ENCODE measurements at regions of chr10 and their contacts with region 1.

Region 1: DNA sequence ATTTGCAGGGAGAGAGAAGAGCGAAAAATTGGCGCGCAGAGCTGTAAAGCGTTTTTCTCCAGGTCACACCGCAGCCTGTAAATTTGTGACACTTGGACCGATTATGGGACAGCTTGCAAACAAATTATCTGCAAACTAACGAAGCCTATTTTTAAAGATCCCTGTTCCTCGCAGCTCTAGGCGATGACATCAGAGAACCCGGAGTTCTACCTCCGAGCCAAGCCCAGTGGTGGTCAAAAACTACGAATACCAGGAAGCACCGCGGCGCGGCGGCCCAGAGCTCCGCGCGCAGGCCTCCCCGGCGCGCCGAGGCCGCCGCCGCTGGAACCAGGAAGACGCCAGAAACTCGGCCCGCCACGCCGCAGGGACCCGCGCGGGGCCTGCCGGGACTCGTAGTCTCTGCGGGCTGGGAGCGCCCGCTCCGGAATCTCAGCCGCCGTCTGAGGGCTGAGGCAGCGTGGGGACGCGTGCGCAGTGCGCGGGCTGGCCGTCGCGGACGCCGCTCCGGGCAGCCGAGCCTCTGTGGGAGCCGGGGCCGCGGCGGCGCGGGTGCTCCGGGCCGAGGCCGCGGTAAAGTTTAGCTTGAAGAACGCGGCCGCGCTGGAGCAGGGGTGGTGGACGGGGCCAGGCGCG is at the start of gene PLEKHA1:
- DNase-seq: peak; percentile 90
- H3K4me3 Mint-ChIP-seq: peak within 1 kb of the TSS; percentile 90
- H3K27ac Mint-ChIP-seq: peak within 1 kb of the TSS; percentile 92
- H3K4me1 Mint-ChIP-seq: peaks cover 15% of the 10 kb centered on the region
- H3K27me3 Mint-ChIP-seq: peaks cover 52% of the 10 kb centered on the region
- total RNA-seq, gene PLEKHA1: 4.1 and 5.6 TPM in 2 replicates

Region 2: DNA sequence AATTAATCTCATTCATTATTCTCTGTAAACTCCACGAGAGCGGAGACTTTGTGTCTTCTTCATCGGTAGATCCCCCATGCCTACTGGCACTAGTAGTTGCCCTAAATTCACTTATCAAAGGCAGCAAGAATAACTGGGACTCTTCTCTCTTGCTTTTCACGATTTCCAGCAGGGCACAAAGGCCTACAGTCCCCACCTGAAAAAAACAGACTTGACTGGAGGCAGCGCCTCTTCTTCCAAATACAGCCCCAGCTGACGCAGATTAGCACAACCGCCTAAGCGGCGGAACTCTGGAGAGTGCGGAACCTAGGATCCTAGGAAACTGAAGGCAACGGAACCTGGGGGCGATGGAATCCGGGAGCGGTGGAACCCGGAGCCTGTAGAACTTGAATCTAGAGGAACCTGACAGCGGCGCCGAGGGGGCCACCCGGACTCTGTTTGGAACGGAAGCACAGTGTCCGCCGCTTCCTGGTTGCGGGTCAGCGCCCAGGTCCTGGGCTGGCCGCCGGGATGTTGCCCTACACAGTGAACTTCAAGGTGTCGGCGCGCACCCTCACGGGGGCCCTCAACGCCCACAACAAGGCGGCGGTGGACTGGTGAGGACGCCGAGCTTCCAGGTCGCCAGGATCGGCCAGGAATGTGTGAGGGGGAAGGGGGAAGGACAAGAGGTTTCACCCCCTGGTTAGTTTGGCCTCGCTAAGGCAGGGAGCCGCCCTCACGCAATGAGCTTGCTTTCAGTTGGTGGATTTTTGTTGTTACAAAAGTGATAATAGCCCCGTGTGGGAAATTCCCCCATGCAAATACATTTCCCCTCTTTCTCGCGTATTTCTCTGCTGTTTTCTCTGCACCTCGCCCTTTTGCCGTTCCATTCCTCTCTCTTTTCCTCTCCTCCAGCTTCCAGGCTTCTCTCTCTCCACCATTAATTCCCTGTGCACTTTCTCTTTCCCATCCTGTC is 1523.2 kb before region 1 on chr10 and contains the start of gene WDR11:
- intact Hi-C with region 1: loop called (anchors 10 kb)
- DNase-seq: peak; percentile 65
- H3K4me3 Mint-ChIP-seq: peak within 1 kb of the TSS; percentile 95
- H3K27ac Mint-ChIP-seq: peak within 1 kb of the TSS; percentile 96
- H3K4me1 Mint-ChIP-seq: peaks cover 49% of the 10 kb centered on the region
- H3K27me3 Mint-ChIP-seq: peaks cover 4% of the 10 kb centered on the region
- total RNA-seq, gene WDR11: 53.0 and 53.1 TPM in 2 replicates

Region 3: GRCh38 chr10:122362621-122363020 is 11.7 kb before region 1 on chr10:
- intact Hi-C with region 1: no loop called
- DNase-seq: no peak
- H3K4me3 Mint-ChIP-seq: no peak overlapping the region
- H3K27ac Mint-ChIP-seq: no peak overlapping the region
- H3K4me1 Mint-ChIP-seq: no peaks in the 10 kb centered on the region
- H3K27me3 Mint-ChIP-seq: peaks cover 12% of the 10 kb centered on the region

Region 4: GRCh38 chr10:122388287-122388997 is 14.1 kb after region 1 on chr10:
- intact Hi-C with region 1: loop called (anchors 1 kb)
- DNase-seq: no peak
- H3K4me3 Mint-ChIP-seq: no peak overlapping the region
- H3K27ac Mint-ChIP-seq: no peak overlapping the region
- H3K4me1 Mint-ChIP-seq: peaks cover 10% of the 10 kb centered on the region
- H3K27me3 Mint-ChIP-seq: peaks cover 35% of the 10 kb centered on the region

Region 5: DNA sequence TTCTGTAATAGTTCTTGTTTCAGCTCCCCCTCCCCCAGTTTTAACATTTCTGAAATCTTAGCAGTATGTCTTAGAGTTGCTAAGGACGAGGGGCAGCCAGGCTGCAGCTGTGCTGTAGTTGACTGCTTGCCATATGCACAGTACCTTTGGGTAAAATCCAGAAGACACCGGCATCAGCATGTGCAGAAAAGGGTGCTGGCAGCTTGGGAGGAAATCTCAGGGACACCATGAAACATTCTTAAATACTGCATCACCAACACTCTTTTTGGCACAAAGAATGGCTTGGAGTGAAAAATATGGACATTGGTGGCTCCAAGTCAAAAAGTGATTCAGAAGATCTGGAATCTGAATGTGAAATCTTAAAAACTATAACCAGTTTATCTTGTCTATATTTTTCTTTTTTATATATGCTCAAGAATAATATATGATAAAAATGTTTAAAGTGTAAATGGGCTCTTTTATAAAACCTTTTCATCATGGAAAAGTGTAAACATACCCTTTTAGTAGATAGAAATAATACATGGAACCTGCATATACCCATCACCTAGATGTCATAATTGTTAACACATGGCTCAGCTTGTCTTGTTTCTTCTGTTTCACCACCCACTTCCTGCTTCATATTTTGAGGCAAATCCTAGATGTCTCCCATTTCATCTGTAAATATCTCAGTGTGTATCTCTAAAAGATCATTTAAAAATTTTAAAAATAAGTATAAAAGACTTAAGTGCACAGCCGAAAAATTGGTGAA is 45.7 kb after region 1 on chr10:
- intact Hi-C with region 1: loop called (anchors 1 kb)
- DNase-seq: no peak
- H3K4me3 Mint-ChIP-seq: no peak overlapping the region
- H3K27ac Mint-ChIP-seq: no peak overlapping the region
- H3K4me1 Mint-ChIP-seq: peaks cover 41% of the 10 kb centered on the region
- H3K27me3 Mint-ChIP-seq: no peaks in the 10 kb centered on the region

Region 6: GRCh38 chr10:122515588-122516231 is 141.4 kb after region 1 on chr10:
- intact Hi-C with region 1: loop called (anchors 5 kb)
- DNase-seq: peak; percentile 17
- H3K4me3 Mint-ChIP-seq: peak overlapping the region; percentile 11
- H3K27ac Mint-ChIP-seq: peak overlapping the region; percentile 35
- H3K4me1 Mint-ChIP-seq: peaks cover 22% of the 10 kb centered on the region
- H3K27me3 Mint-ChIP-seq: peaks cover 6% of the 10 kb centered on the region

Region 7: GRCh38 chr10:123008439-123009205 is 634.3 kb after region 1 on chr10 and contains the starts of genes ACADSB and IKZF5:
- intact Hi-C with region 1: loop called (anchors 10 kb)
- DNase-seq: peak; percentile 94
- H3K4me3 Mint-ChIP-seq: peak within 1 kb of the TSS; percentile 95
- H3K27ac Mint-ChIP-seq: peak within 1 kb of the TSS; percentile 95
- H3K4me1 Mint-ChIP-seq: peaks cover 43% of the 10 kb centered on the region
- H3K27me3 Mint-ChIP-seq: no peaks in the 10 kb centered on the region
- total RNA-seq, gene ACADSB: 25.8 and 26.5 TPM in 2 replicates
- total RNA-seq, gene IKZF5: 17.4 and 21.9 TPM in 2 replicates